Activated naive CD4-positive, alpha-beta T cell treated with anti-CD3 and anti-CD28 coated beads for 36 hours (primary cell): ENCODE measurements at regions of chr16 and their contacts with region 1.

Region 1: DNA sequence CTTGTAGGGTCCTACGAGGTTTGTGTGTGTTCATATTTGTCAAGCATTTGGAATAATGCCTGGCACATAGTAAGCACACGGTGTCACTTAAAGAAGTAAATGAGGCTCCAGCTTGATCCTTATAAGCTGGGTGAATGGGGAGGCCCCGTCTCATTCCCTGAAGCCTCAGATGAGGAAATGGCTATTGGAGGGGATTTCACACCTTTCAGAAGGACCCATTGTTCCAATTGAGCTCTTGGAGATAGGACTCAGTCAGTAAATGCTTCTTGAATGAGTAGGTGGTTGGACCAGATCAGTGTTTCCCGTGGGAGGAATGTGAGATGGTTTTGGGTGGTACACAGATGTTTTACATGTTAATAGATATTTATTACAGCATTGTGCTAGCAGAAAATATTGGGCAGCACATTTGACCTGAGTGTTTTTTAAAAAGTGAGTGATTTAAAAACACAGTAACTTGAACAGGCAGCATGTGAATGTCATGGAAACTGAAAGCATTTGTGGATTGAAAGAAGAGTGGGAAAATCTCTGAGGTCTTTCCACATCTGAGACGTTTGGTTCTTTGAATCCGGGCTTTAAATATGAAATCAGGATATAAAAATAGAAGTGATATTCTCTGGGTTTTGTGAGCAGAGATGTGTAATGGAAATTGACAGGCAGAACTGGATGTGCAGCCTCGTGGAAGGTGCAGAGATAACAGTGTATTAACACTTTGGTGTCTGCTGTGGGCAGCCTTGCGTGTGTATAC is 36.4 kb upstream of the ARHGAP17 start:
- DNase-seq: peak; percentile 39
- H3K4me3 Mint-ChIP-seq: peak overlapping the region; percentile 53
- H3K27ac Mint-ChIP-seq: peak overlapping the region; percentile 74
- H3K4me1 Mint-ChIP-seq: peaks cover 66% of the 10 kb centered on the region
- H3K27me3 Mint-ChIP-seq: no peaks in the 10 kb centered on the region

Region 2: GRCh38 chr16:25031441-25032307 is 19.9 kb before region 1 on chr16:
- CTCF ChIA-PET with region 1: interaction called, 4 read pairs
- intact Hi-C with region 1: loop called (anchors 1 kb)
- DNase-seq: peak; percentile 96
- H3K4me3 Mint-ChIP-seq: peak overlapping the region; percentile 83
- H3K27ac Mint-ChIP-seq: peak overlapping the region; percentile 98
- H3K4me1 Mint-ChIP-seq: peaks cover 52% of the 10 kb centered on the region
- H3K27me3 Mint-ChIP-seq: no peaks in the 10 kb centered on the region

Region 3: GRCh38 chr16:25093208-25094061 is 41.9 kb after region 1 on chr16:
- CTCF ChIA-PET with region 1: interaction called, 6 read pairs
- intact Hi-C with region 1: loop called (anchors 1 kb)
- DNase-seq: peak; percentile 49
- H3K4me3 Mint-ChIP-seq: peak overlapping the region; percentile 53
- H3K27ac Mint-ChIP-seq: peak overlapping the region; percentile 78
- H3K4me1 Mint-ChIP-seq: peaks cover 37% of the 10 kb centered on the region
- H3K27me3 Mint-ChIP-seq: no peaks in the 10 kb centered on the region

Region 4: DNA sequence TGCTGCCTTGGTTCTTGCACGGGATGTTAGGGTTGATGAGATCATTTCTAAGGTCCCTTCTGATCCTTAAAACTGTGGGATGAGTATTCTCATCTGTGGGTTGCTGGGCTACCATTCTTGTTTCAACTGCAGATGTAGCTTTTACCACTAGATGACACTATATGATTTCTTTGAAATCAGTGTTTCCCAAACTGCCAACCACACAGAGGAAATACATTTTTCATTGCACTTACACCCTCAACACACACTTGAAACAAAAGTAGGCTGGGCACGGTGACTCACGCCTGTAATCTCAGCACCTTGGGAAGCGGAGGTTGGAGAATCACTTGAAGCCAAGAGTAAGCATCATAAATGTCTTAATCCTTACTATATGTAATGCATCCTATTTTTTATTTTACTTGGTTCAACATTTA is 75.2 kb after region 1 on chr16:
- CTCF ChIA-PET with region 1: interaction called, 4 read pairs
- intact Hi-C with region 1: loop called (anchors 1 kb)
- DNase-seq: peak; percentile 73
- H3K4me3 Mint-ChIP-seq: no peak overlapping the region
- H3K27ac Mint-ChIP-seq: no peak overlapping the region
- H3K4me1 Mint-ChIP-seq: peaks cover 36% of the 10 kb centered on the region
- H3K27me3 Mint-ChIP-seq: no peaks in the 10 kb centered on the region